AG04450 (cell line): ENCODE measurements at regions of chr3 and their contacts with region 1.

Region 1: GRCh38 chr3:42071904-42072592 is 19.1 kb upstream of the TRAK1 start:
- DNase-seq: no peak
- H3K4me3 ChIP-seq: peak overlapping the region; percentile 43
- H3K27ac ChIP-seq: peak overlapping the region; percentile 82
- H3K27me3 ChIP-seq: no peaks in the 10 kb centered on the region
- CTCF ChIP-seq: no peak

Region 2: DNA sequence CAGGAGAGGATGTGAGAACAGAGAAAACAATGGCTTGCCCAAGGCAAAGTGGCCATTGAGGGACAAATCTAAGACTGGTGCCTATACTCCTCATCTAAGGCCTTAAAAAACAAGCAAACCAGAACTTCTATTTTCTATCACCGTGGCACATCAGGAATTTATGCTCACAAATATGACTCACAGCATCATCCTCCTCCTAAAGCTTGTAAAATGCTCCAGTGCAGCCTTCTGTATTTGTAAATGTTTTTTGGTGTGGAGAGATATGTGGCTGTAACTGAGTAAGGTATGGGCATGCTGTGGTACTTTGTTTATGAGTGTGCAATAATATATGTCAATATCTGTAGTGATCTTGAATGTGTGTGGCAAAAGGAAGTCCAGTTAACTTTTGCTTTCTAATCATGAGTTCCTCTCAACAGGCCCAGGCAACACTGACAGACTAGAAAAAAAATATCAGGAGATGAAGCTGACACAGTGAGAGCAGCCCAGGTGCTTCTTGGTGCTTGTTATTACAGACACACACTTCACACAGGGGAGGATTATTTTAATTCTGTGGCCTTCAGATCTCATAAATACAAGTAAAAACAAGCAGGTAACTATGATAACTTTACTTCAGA is 812.5 kb before region 1 on chr3:
- CTCF ChIA-PET with region 1: no interaction called
- POLR2A ChIA-PET with region 1: interaction called, 12 read pairs
- DNase-seq: no peak
- H3K4me3 ChIP-seq: no peak overlapping the region
- H3K27ac ChIP-seq: no peak overlapping the region
- H3K27me3 ChIP-seq: no peaks in the 10 kb centered on the region
- CTCF ChIP-seq: no peak

Region 3: GRCh38 chr3:41853540-41854196 is 218.4 kb before region 1 on chr3:
- CTCF ChIA-PET with region 1: no interaction called
- POLR2A ChIA-PET with region 1: no interaction called
- DNase-seq: no peak
- H3K4me3 ChIP-seq: no peak overlapping the region
- H3K27ac ChIP-seq: no peak overlapping the region
- H3K27me3 ChIP-seq: no peaks in the 10 kb centered on the region
- CTCF ChIP-seq: no peak

Region 4: GRCh38 chr3:42061713-42062408 is 10.2 kb before region 1 on chr3:
- CTCF ChIA-PET with region 1: no interaction called
- POLR2A ChIA-PET with region 1: interaction called, 17 read pairs
- DNase-seq: peak; percentile 63
- H3K4me3 ChIP-seq: no peak overlapping the region
- H3K27ac ChIP-seq: peak overlapping the region; percentile 67
- H3K27me3 ChIP-seq: no peaks in the 10 kb centered on the region
- CTCF ChIP-seq: no peak

Region 5: DNA sequence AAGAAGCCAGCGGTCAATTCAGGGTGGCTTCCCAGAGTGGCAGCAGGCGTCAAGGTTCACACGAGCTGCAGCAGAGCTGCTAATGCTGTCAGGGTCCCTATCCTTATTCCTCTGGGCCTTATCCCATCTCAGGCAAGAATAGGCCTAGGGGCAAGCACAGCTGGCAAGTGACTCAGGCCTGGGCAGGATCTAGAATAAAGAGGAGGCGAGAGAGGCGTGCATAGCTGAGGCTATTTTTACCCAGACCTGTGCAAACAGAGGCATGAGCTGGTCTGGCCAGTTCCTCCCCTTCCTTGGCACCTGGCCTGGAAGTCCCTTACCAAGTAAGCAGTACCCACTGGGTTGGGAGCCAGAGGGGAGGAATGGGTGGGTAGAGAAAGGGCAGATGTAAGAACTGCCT is 418.2 kb after region 1 on chr3:
- CTCF ChIA-PET with region 1: no interaction called
- POLR2A ChIA-PET with region 1: no interaction called
- DNase-seq: no peak
- H3K4me3 ChIP-seq: no peak overlapping the region
- H3K27ac ChIP-seq: no peak overlapping the region
- H3K27me3 ChIP-seq: no peaks in the 10 kb centered on the region
- CTCF ChIP-seq: no peak